IMR-90 (cell line): ENCODE measurements at regions of chr9 and their contacts with region 1.

Region 1: DNA sequence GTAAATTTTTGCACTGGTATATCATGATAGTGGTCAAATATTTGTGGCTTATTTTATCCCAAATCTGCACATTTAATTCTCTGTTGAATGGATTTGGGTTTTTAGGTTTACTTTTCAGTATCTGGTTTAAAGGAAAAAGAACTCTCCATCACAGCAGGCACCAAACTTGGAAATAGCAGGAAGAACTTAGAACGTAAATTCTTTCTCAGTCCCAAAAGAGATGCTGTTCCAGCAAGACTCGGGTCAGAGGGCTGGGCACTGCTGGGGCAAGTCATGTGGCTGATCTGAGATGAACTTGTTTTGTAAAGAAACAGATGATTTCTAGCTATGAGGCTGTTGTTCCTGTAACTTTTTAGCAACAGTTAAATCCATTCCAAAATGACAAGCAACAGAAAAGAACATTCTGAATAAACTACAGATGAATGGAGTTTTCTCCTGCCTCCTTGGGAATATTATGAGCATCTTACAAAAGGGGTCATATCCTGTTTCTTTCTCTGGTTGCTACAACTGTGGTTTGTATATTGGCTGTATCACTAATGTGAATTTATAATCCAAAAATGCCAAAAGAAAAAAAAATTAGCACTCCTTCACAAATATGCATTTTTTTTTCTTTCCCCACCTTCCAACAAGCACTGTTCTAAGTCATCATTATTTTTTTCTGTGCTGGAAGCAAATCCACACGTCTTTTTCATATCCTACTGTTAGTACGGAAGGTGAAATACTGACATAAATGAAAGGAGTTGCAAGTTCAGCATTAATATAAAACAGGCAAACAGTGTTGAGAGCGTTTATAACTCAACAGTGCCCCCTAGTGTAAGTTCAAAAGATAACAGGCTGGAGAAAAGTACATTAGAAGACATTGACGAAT is 31.1 kb downstream of the OR2K2 start:
- DNase-seq: peak; percentile 81
- ATAC-seq: peak; percentile 93
- H3K4me3 ChIP-seq: no peak overlapping the region
- H3K27ac ChIP-seq: peak overlapping the region; percentile 98
- H3K4me1 ChIP-seq: peaks cover 5% of the 10 kb centered on the region; the same call in 1 of the 2 replicates
- H3K27me3 ChIP-seq: no peaks in the 10 kb centered on the region
- CTCF ChIP-seq: peak; percentile 90
- POLR2A ChIP-seq: peak; percentile 36; the same call in 1 of the 2 replicates
- RAD21 ChIP-seq: peak; percentile 95

Region 2: GRCh38 chr9:110579034-110579861 is 719.7 kb before region 1 on chr9 and contains the start of gene SVEP1:
- CTCF ChIA-PET with region 1: no interaction called
- POLR2A ChIA-PET with region 1: no interaction called
- dilution Hi-C with region 1: no loop called
- in situ Hi-C with region 1: no loop called
- intact Hi-C with region 1: loop called (anchors 5 kb)
- DNase-seq: peak; percentile 77
- ATAC-seq: peak; percentile 61
- H3K4me3 ChIP-seq: peak within 1 kb of the TSS; percentile 51
- H3K27ac ChIP-seq: peak within 1 kb of the TSS; percentile 85
- H3K4me1 ChIP-seq: peaks cover 15% of the 10 kb centered on the region
- H3K27me3 ChIP-seq: no peaks in the 10 kb centered on the region
- CTCF ChIP-seq: no peak
- POLR2A ChIP-seq: peak; percentile 55
- RAD21 ChIP-seq: no peak
- total RNA-seq, gene SVEP1: 13.1 and 16.7 TPM in 2 replicates

Region 3: GRCh38 chr9:110744753-110745384 is 554.1 kb before region 1 on chr9:
- CTCF ChIA-PET with region 1: no interaction called
- POLR2A ChIA-PET with region 1: no interaction called
- dilution Hi-C with region 1: no loop called
- in situ Hi-C with region 1: no loop called
- intact Hi-C with region 1: loop called (anchors 5 kb)
- DNase-seq: peak; percentile 98
- ATAC-seq: peak; percentile 79
- H3K4me3 ChIP-seq: no peak overlapping the region
- H3K27ac ChIP-seq: peak overlapping the region; percentile 100
- H3K4me1 ChIP-seq: peaks cover 17% of the 10 kb centered on the region
- H3K27me3 ChIP-seq: no peaks in the 10 kb centered on the region
- CTCF ChIP-seq: no peak
- POLR2A ChIP-seq: no peak
- RAD21 ChIP-seq: no peak; the same call in 1 of the 2 replicates

Region 4: DNA sequence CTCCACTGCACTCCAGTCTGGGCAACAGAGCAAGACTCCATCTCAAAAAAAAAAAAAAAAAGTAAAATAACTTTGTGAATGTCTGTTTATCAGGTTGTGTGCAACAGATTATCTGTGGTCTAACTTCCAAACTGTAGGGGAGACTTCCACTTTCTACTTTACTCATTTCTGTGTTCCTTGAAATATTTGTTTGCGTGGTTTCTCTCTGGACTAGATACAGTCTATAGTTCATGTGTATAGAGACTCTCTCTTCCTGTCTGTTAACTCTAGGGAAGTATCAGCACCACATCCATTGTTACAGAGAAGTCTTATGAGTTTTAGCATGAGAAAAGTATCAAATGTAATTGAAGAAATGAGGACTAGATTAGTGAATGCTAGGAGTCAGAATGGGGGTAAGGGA is 429.0 kb before region 1 on chr9:
- CTCF ChIA-PET with region 1: no interaction called
- POLR2A ChIA-PET with region 1: no interaction called
- dilution Hi-C with region 1: no loop called
- in situ Hi-C with region 1: no loop called
- intact Hi-C with region 1: loop called (anchors 10 kb)
- DNase-seq: no peak
- ATAC-seq: no peak
- H3K4me3 ChIP-seq: no peak overlapping the region
- H3K27ac ChIP-seq: no peak overlapping the region
- H3K4me1 ChIP-seq: no peaks in the 10 kb centered on the region
- H3K27me3 ChIP-seq: no peaks in the 10 kb centered on the region
- CTCF ChIP-seq: no peak
- POLR2A ChIP-seq: no peak
- RAD21 ChIP-seq: no peak

Region 5: GRCh38 chr9:110977259-110977709 is 321.7 kb before region 1 on chr9:
- CTCF ChIA-PET with region 1: no interaction called
- POLR2A ChIA-PET with region 1: no interaction called
- dilution Hi-C with region 1: no loop called
- in situ Hi-C with region 1: no loop called
- intact Hi-C with region 1: loop called (anchors 5 kb)
- DNase-seq: peak; percentile 91
- ATAC-seq: peak; percentile 27
- H3K4me3 ChIP-seq: no peak overlapping the region
- H3K27ac ChIP-seq: peak overlapping the region; percentile 5; the same call in 1 of the 2 replicates
- H3K4me1 ChIP-seq: peaks cover 17% of the 10 kb centered on the region
- H3K27me3 ChIP-seq: no peaks in the 10 kb centered on the region
- CTCF ChIP-seq: no peak
- POLR2A ChIP-seq: no peak
- RAD21 ChIP-seq: no peak

Region 6: DNA sequence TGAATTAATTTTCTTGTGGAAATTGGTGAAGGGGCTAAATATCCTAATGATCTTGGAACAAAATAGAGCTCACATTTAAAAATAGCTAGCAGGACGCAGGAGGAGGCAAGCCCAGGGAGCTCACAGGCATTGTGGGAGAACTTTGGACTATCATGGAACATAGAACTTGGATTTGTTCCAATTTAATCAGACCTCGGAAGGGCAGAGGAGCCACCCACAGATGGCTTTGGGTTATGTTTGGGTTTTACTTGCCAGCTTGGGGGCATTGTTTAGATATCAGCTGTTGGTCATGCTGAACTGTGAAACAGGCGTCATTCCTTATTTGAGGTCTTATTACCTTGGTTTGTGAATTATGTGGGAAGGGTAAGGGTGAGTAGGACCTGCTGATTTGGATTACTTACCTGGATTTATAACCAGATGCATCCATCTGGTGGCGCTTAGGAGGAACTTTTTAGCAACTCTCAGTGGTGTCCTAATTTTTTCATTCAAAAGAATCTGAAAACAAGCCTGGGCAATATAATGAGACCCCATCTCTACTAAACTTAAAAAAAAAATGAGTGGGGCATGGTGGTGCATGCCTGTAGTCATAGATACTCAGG is 314.6 kb after region 1 on chr9:
- CTCF ChIA-PET with region 1: no interaction called
- POLR2A ChIA-PET with region 1: no interaction called
- dilution Hi-C with region 1: no loop called
- in situ Hi-C with region 1: no loop called
- intact Hi-C with region 1: no loop called
- DNase-seq: no peak
- ATAC-seq: no peak
- H3K4me3 ChIP-seq: no peak overlapping the region
- H3K27ac ChIP-seq: no peak overlapping the region
- H3K4me1 ChIP-seq: no peaks in the 10 kb centered on the region
- H3K27me3 ChIP-seq: peaks cover 33% of the 10 kb centered on the region
- CTCF ChIP-seq: no peak
- POLR2A ChIP-seq: no peak
- RAD21 ChIP-seq: no peak